Activated naive CD4-positive, alpha-beta T cell treated with anti-CD3 and anti-CD28 coated beads for 36 hours (primary cell): ENCODE measurements at regions of chr4 and their contacts with region 1.

Region 1: DNA sequence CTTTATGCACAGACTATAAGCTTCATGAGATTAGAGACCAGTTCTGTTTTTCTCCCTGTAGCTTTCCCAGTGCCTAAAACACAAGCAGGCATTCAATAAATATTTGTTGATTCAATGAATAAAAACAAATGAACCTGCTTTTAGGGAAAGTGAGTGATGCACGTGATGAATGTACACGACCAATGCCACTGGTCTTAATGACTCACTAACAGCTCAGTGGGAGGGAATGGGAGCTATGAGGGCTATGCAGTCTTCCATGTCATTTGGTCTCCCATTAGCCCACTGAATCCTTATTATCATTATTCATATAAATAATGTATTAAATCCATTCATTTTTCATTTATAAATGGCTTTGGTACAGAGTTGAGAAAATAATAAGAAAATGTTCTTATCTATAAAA is 247.4 kb downstream of the FBXO8 start:
- DNase-seq: no peak
- H3K4me3 Mint-ChIP-seq: no peak overlapping the region
- H3K27ac Mint-ChIP-seq: no peak overlapping the region
- H3K4me1 Mint-ChIP-seq: no peaks in the 10 kb centered on the region
- H3K27me3 Mint-ChIP-seq: no peaks in the 10 kb centered on the region

Region 2: GRCh38 chr4:173698557-173699262 is 337.4 kb before region 1 on chr4:
- CTCF ChIA-PET with region 1: no interaction called
- intact Hi-C with region 1: no loop called
- DNase-seq: no peak
- H3K4me3 Mint-ChIP-seq: no peak overlapping the region
- H3K27ac Mint-ChIP-seq: no peak overlapping the region
- H3K4me1 Mint-ChIP-seq: no peaks in the 10 kb centered on the region
- H3K27me3 Mint-ChIP-seq: no peaks in the 10 kb centered on the region

Region 3: GRCh38 chr4:173883821-173884220 is 152.3 kb before region 1 on chr4:
- CTCF ChIA-PET with region 1: no interaction called
- intact Hi-C with region 1: loop called (anchors 10 kb)
- DNase-seq: no peak
- H3K4me3 Mint-ChIP-seq: no peak overlapping the region
- H3K27ac Mint-ChIP-seq: no peak overlapping the region
- H3K4me1 Mint-ChIP-seq: no peaks in the 10 kb centered on the region
- H3K27me3 Mint-ChIP-seq: peaks cover under 1% of the 10 kb centered on the region

Region 4: DNA sequence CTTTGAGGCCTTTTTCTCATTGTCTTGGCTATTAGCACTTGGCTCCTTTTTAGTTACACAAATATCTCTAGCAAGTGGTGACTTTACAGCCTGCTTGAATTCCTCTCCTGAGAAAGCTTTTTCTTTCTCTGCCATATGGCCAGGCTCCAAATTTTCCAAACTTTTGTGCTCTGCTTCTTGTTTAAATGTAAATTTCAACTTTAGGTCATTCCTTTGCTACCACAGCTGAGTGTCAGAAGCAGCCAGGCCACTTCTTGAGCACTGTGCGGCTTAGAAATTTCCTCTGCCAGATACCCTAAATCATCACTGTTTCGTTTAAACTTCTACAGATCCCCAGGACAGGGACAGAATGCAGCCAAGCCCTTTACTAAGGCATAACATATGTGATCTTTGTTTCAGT is 24.9 kb after region 1 on chr4:
- CTCF ChIA-PET with region 1: no interaction called
- intact Hi-C with region 1: no loop called
- DNase-seq: no peak
- H3K4me3 Mint-ChIP-seq: no peak overlapping the region
- H3K27ac Mint-ChIP-seq: no peak overlapping the region
- H3K4me1 Mint-ChIP-seq: no peaks in the 10 kb centered on the region
- H3K27me3 Mint-ChIP-seq: no peaks in the 10 kb centered on the region